ENCODE measurements at regions of chr11 and their contacts with region 1.

Region 1: GRCh38 chr11:46308631-46309419 is 31.4 kb downstream of the CREB3L1 start:
- DNase-seq: no peak
- ATAC-seq: peak; percentile 90
- H3K4me3 ChIP-seq: no peak overlapping the region
- H3K27ac ChIP-seq: no peak overlapping the region
- H3K4me1 ChIP-seq: peaks cover 7% of the 10 kb centered on the region
- H3K27me3 ChIP-seq: no peaks in the 10 kb centered on the region; a peak in 1 of 4 replicates
- CTCF ChIP-seq: peak; percentile 85 to 96 (median 93)
- EP300 ChIP-seq: no peak
- POLR2A ChIP-seq: no peak
- RAD21 ChIP-seq: peak; percentile 88

Region 2: GRCh38 chr11:46247664-46248063 is 61.2 kb before region 1 on chr11:
- CTCF ChIA-PET with region 1: interaction called, 626 read pairs
- POLR2A ChIA-PET with region 1: interaction called, 9 read pairs
- RAD21 ChIA-PET with region 1: interaction called, 316 read pairs
- SMC1A ChIA-PET with region 1: interaction called, 120 read pairs
- in situ Hi-C with region 1: loop called (anchors 5 kb)
- intact Hi-C with region 1: loop called (anchors 1 kb)
- DNase-seq: no peak
- ATAC-seq: peak; percentile 53
- H3K4me3 ChIP-seq: no peak overlapping the region
- H3K27ac ChIP-seq: no peak overlapping the region
- H3K4me1 ChIP-seq: peaks cover 17% of the 10 kb centered on the region
- H3K27me3 ChIP-seq: no peaks in the 10 kb centered on the region
- CTCF ChIP-seq: peak; percentile 63 to 81 (median 68)
- EP300 ChIP-seq: no peak
- POLR2A ChIP-seq: no peak
- RAD21 ChIP-seq: peak; percentile 87

Region 3: DNA sequence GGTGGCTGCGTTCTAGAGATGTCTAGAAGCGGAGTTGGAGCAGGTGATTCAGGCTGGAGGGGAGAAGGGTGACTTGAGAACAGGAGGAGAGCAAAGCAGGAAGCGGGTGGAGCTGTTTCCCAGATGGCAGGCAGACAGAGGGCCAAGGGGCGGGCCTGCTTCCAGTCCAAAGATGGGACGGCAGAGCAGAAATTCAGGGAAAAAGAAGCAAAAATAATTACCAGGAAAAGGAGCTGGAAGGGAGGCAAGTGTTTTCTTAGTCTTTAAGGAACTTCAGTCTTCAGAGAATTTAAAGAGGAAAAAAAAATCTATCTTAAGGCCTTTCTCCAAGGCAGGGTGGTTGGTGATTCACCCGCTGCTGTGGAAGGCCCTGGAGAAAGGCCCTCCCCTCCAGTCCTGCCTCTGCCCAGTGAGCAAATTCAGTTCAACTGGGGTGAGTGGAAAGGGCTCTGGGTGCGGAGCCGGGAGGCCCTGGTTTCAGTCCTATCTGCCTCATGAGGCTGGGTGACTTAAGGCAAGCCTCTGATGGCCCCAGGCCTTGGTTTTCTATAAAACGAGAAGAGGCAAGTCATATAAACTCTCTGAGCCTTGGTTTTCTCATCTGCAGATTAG is 35.9 kb before region 1 on chr11:
- CTCF ChIA-PET with region 1: interaction called, 68 read pairs
- POLR2A ChIA-PET with region 1: interaction called, 3 read pairs
- RAD21 ChIA-PET with region 1: interaction called, 20 read pairs
- SMC1A ChIA-PET with region 1: interaction called, 15 read pairs
- in situ Hi-C with region 1: no loop called
- intact Hi-C with region 1: no loop called
- DNase-seq: no peak
- ATAC-seq: no peak
- H3K4me3 ChIP-seq: no peak overlapping the region
- H3K27ac ChIP-seq: no peak overlapping the region
- H3K4me1 ChIP-seq: peaks cover 16% of the 10 kb centered on the region
- H3K27me3 ChIP-seq: 0 out of 4 replicates have a peak, but pooled peaks cover 0 to under 1% of the 10 kb centered on the region in 2 experiments
- CTCF ChIP-seq: no peak
- EP300 ChIP-seq: no peak
- POLR2A ChIP-seq: no peak
- RAD21 ChIP-seq: no peak

Region 4: DNA sequence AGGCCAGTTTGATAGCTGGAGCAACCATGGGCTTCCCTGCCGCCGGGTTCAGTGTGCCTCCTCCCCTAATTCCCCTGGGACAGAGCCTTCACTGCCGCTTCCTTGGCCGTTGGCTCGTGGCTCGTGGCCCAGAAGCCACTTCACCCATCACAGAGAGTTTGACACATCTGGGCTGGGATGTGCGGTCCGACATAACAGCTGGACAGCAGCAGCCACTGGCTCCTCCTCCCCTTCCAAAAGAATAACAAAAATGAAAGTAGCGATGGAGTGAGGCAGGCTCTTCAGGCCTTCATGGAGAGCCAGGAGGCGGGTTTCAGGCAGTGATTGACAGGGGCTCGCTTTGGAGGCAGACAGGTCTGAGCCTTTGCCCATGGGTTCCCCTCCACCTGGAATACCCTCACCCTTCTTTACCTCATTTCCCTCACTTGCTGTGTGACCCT is 23.2 kb before region 1 on chr11:
- CTCF ChIA-PET with region 1: interaction called, 68 read pairs
- POLR2A ChIA-PET with region 1: no interaction called
- RAD21 ChIA-PET with region 1: interaction called, 6 read pairs
- SMC1A ChIA-PET with region 1: interaction called, 5 read pairs
- in situ Hi-C with region 1: no loop called
- intact Hi-C with region 1: no loop called
- DNase-seq: no peak
- ATAC-seq: no peak
- H3K4me3 ChIP-seq: peak overlapping the region; percentile 14; the same call in 1 of the 2 replicates
- H3K27ac ChIP-seq: no peak overlapping the region
- H3K4me1 ChIP-seq: peaks cover 10% of the 10 kb centered on the region; the same call in 1 of the 2 replicates
- H3K27me3 ChIP-seq: no peaks in the 10 kb centered on the region
- CTCF ChIP-seq: no peak
- EP300 ChIP-seq: no peak
- POLR2A ChIP-seq: no peak
- RAD21 ChIP-seq: no peak

Region 5: GRCh38 chr11:46346886-46347636 is 38.2 kb after region 1 on chr11 and contains the start of gene DGKZ:
- CTCF ChIA-PET with region 1: interaction called, 25 read pairs
- POLR2A ChIA-PET with region 1: no interaction called
- RAD21 ChIA-PET with region 1: interaction called, 5 read pairs
- SMC1A ChIA-PET with region 1: interaction called, 11 read pairs
- in situ Hi-C with region 1: no loop called
- intact Hi-C with region 1: no loop called
- DNase-seq: no peak
- ATAC-seq: peak; percentile 69
- H3K4me3 ChIP-seq: peak within 1 kb of the TSS; percentile 88
- H3K27ac ChIP-seq: peak within 1 kb of the TSS; percentile 71
- H3K4me1 ChIP-seq: peaks cover 39% of the 10 kb centered on the region
- H3K27me3 ChIP-seq: no peaks in the 10 kb centered on the region
- CTCF ChIP-seq: peak; percentile 63 to 92 (median 64); a peak in 4 of 6 replicates
- EP300 ChIP-seq: no peak
- POLR2A ChIP-seq: no peak; the same call in 1 of the 2 replicates
- RAD21 ChIP-seq: peak; percentile 64
- polyA plus RNA-seq, gene DGKZ: 0.50 to 1.6 TPM

Region 6: DNA sequence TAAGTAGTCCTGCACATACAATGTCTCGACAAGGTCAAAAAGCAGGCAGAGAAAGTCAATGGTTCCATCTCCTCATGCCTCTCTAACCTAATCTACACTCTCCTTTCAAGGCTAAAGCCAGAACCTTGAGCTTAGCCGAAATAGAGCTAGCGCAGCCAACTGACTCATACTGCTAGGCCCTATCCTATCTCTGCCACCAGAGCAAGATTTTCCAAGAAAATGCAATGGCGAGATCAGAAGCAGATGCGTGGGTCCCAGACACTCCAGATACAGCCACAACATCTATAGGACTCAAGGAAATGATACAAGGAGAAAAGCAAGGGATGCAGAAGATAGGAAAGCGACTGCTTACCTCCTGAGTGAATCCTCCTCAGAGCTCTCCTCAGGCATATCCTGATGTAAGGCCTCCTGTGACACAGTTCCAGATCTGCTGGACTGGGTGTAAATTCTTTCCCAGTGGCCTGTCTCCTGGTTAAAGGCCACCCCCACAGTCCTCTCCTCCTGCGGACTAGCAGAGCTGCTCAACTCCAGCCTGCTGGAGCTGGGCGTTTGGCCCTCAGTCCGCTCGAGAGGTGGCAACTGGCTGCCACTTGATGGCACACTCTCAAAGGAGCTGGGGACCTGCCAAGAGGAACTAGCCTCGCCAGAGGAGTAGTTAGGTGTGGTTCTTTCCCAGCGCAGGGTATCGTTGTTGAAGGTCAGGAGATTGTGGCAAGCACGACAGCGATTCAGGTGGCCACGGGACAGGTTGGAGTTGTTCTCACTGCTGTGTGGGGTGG is 233.0 kb after region 1 on chr11:
- CTCF ChIA-PET with region 1: no interaction called
- POLR2A ChIA-PET with region 1: no interaction called
- RAD21 ChIA-PET with region 1: no interaction called
- SMC1A ChIA-PET with region 1: no interaction called
- in situ Hi-C with region 1: no loop called
- intact Hi-C with region 1: no loop called
- DNase-seq: no peak
- ATAC-seq: no peak
- H3K4me3 ChIP-seq: no peak overlapping the region
- H3K27ac ChIP-seq: no peak overlapping the region
- H3K4me1 ChIP-seq: no peaks in the 10 kb centered on the region
- H3K27me3 ChIP-seq: no peaks in the 10 kb centered on the region
- CTCF ChIP-seq: peak in 1 of 3 experiments; percentile 20; a peak in 1 of 6 replicates
- EP300 ChIP-seq: no peak
- POLR2A ChIP-seq: no peak
- RAD21 ChIP-seq: no peak

Region 7: GRCh38 chr11:46865340-46865739 is 556.5 kb after region 1 on chr11:
- CTCF ChIA-PET with region 1: no interaction called
- POLR2A ChIA-PET with region 1: no interaction called
- RAD21 ChIA-PET with region 1: no interaction called
- SMC1A ChIA-PET with region 1: no interaction called
- in situ Hi-C with region 1: no loop called
- intact Hi-C with region 1: no loop called
- DNase-seq: no peak
- ATAC-seq: no peak
- H3K4me3 ChIP-seq: no peak overlapping the region
- H3K27ac ChIP-seq: no peak overlapping the region
- H3K4me1 ChIP-seq: no peaks in the 10 kb centered on the region
- H3K27me3 ChIP-seq: no peaks in the 10 kb centered on the region; a peak in 1 of 4 replicates
- CTCF ChIP-seq: no peak
- EP300 ChIP-seq: no peak
- POLR2A ChIP-seq: no peak
- RAD21 ChIP-seq: no peak

Measured in GM12878 (cell line).